Activated CD4-positive, alpha-beta memory T cell treated with anti-CD3 and anti-CD28 coated beads for 36 hours (primary cell): ENCODE measurements at regions of chr12 and their contacts with region 1.

Region 1: DNA sequence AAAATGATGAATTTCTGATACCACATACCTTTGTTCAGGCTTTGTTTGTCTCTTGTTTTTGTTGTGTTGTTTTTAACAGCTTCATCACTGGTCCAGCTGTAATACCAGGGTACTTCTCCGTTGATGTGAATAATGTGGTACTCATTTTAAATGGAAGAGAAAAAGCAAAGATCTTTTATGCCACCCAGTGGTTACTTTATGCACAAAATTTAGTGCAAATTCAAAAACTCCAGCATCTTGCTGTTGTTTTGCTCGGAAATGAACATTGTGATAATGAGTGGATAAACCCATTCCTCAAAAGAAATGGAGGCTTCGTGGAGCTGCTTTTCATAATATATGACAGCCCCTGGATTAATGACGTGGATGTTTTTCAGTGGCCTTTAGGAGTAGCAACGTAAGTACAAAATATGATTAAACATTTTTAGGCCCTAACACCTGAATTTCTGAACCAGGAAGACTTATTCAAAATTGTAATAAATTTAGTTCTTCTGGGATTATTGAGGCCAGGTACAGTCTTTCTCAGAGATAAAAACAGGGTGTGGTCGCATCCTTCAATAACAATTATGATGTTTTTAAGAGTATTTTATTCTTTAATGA is 22.4 kb downstream of the RXYLT1 start:
- DNase-seq: no peak
- H3K4me3 Mint-ChIP-seq: no peak overlapping the region
- H3K27ac Mint-ChIP-seq: no peak overlapping the region
- H3K4me1 Mint-ChIP-seq: no peaks in the 10 kb centered on the region
- H3K27me3 Mint-ChIP-seq: no peaks in the 10 kb centered on the region

Region 2: DNA sequence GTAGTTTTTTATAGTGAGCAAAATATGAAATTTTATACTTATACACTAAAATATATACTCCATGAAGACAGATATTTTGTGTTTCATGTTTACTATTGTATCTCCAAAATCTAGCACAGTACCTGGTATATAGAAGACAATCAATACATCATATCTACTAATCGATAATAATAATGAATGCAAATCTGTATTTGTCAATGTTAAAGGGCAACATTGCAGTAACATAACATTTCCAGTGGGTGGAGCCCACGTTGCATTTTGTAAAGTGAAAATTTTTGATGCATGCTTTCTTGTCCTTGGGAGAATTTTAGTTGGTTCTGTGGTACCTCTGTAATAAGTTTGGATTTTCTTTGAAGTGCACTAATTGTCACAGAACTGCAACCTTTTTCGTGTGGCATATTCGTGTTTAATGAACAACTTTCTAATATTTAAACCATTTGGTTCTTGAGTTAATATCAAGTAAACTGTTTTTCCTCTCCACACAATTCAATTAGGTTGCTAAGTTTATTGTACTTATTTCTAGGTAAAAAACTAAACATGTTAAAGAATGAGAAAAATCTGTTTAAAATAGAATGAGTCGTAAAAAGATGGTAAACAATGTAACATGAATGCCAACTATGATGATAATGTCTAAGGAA is 698.5 kb before region 1 on chr12:
- CTCF ChIA-PET with region 1: interaction called, 6 read pairs
- POLR2A ChIA-PET with region 1: no interaction called
- intact Hi-C with region 1: loop called (anchors 5 kb)
- DNase-seq: no peak
- H3K4me3 Mint-ChIP-seq: no peak overlapping the region
- H3K27ac Mint-ChIP-seq: no peak overlapping the region
- H3K4me1 Mint-ChIP-seq: no peaks in the 10 kb centered on the region
- H3K27me3 Mint-ChIP-seq: no peaks in the 10 kb centered on the region

Region 3: GRCh38 chr12:63387771-63388170 is 414.3 kb before region 1 on chr12:
- CTCF ChIA-PET with region 1: no interaction called
- POLR2A ChIA-PET with region 1: no interaction called
- intact Hi-C with region 1: no loop called
- DNase-seq: no peak
- H3K4me3 Mint-ChIP-seq: no peak overlapping the region
- H3K27ac Mint-ChIP-seq: no peak overlapping the region
- H3K4me1 Mint-ChIP-seq: no peaks in the 10 kb centered on the region
- H3K27me3 Mint-ChIP-seq: no peaks in the 10 kb centered on the region

Region 4: GRCh38 chr12:63420206-63420644 is 381.9 kb before region 1 on chr12:
- CTCF ChIA-PET with region 1: interaction called, 3 read pairs
- POLR2A ChIA-PET with region 1: no interaction called
- intact Hi-C with region 1: loop called (anchors 2 kb)
- DNase-seq: peak; percentile 37
- H3K4me3 Mint-ChIP-seq: no peak overlapping the region
- H3K27ac Mint-ChIP-seq: no peak overlapping the region
- H3K4me1 Mint-ChIP-seq: no peaks in the 10 kb centered on the region
- H3K27me3 Mint-ChIP-seq: no peaks in the 10 kb centered on the region

Region 5: DNA sequence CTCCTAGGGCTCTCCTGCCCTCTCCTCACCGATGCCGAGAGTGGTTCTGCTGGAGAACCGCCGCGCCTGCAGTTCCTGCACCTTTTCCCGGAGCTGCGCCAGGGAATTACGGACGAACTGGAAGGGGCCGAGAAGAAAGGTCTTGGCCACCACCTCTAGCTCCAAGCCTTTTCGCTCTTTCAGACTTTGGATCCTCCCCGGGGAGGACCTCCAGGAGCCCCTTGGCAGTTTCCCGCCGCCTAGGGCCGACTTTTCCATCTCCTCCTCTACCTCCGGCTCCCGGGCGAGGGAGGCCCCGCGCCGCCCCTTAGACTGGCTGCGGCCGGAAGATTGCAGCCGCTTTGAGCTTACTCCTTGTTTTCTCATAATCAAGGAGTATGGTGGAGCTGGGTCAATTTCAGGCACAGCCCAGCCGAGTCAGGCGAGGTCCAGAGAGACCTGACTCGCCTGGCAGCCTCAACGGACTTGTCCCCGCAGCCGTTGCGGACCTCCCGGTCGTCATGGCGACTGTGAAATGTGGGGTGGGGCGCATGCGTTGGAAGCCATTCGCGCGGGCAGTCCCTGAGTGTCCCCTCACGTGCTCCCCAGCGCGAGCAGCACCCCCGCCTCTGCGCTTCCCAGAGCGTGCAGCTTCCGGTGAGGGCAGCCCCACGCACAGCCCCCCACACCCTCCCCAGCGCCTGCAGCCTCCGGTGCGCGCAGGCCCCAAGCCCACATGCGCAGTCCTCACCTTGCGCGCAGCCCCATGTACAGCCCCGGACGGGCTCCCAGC is 133.9 kb before region 1 on chr12 and contains the start of gene DPY19L2:
- CTCF ChIA-PET with region 1: interaction called, 4 read pairs
- POLR2A ChIA-PET with region 1: no interaction called
- intact Hi-C with region 1: loop called (anchors 2 kb)
- DNase-seq: peak; percentile 53
- H3K4me3 Mint-ChIP-seq: peak within 1 kb of the TSS; percentile 73
- H3K27ac Mint-ChIP-seq: no peak within 1 kb of the TSS
- H3K4me1 Mint-ChIP-seq: peaks cover 12% of the 10 kb centered on the region
- H3K27me3 Mint-ChIP-seq: peaks cover 32% of the 10 kb centered on the region
- total RNA-seq, gene DPY19L2: 0.34 to 0.67 TPM